Naive thymus-derived CD4-positive, alpha-beta T cell (primary cell): ENCODE measurements at regions of chr13 and their contacts with region 1.

Region 1: DNA sequence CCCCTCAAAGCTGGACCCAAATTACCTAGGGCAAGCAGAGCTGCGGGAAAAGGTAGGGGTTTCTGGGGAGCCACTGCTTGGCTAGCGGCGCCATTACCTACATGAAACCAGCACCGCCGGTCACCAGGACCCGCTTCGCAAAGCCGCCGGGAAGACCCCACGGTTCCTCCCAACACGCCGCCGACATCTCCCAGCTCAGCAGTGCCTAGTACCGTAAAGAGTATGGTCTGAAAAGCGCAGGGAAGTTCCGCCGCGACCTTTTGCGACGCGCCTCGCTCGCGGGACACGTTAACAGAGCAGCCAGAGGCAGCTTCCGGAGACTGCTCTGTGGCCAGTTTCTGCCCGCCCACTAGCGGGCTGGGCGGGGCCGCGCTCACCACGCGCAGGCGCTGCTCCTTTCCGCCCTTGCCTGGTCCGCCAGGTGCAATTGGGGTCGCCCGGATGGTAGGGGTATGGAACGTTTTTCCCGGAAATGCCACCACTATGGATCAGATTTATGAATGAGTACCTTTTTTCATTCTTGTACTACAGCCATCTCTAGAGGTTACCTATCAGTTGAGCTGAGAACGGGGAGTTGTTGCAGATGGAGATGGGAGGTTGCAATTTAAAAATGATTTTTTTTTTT is at the start of gene TGDS:
- DNase-seq: peak; percentile 71 to 89 (median 86)
- ATAC-seq: peak; percentile 99
- H3K4me3 ChIP-seq: peak within 1 kb of the TSS; percentile 92
- H3K4me3 Mint-ChIP-seq: peak within 1 kb of the TSS; percentile 92 to 99 (median 97)
- H3K27ac ChIP-seq: peak within 1 kb of the TSS; percentile 80
- H3K27ac Mint-ChIP-seq: peak within 1 kb of the TSS; percentile 83 to 96 (median 93)
- H3K4me1 ChIP-seq: peaks cover 16 to 19% of the 10 kb centered on the region in 2 donors
- H3K4me1 Mint-ChIP-seq: peaks cover 29 to 53% (median 41%) of the 10 kb centered on the region in 7 donors
- H3K27me3 ChIP-seq: no peaks in the 10 kb centered on the region
- H3K27me3 Mint-ChIP-seq: no peaks in the 10 kb centered on the region
- total RNA-seq, gene TGDS: 5.9 to 20.5 (median 13.7) TPM

Region 2: DNA sequence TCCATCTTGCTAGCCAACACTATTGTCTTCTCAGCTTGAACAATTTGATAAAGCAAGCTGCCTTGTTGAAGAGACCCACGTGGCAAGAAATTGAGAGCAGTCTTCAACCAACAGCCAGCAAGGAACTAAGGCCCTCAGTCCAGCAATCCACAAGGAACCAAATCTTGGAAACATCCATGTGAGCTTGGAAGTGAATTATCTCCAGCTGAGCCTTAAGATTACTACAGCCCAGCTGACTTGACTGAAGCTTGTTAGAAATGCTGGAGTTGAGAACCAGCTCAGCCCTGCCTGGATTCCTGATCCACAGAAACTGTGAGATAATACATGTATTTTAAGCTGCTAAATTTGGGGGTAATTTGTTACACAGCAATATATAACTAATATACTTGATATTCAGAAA is 90.3 kb before region 1 on chr13:
- CTCF ChIA-PET with region 1: no interaction called
- POLR2A ChIA-PET with region 1: interaction called, 4 read pairs
- intact Hi-C with region 1: loop called in 1 of 2 experiments (anchors 1 kb)
- DNase-seq: no peak
- ATAC-seq: no peak
- H3K4me3 ChIP-seq: no peak overlapping the region
- H3K4me3 Mint-ChIP-seq: no peak overlapping the region
- H3K27ac ChIP-seq: no peak overlapping the region
- H3K27ac Mint-ChIP-seq: no peak overlapping the region
- H3K4me1 ChIP-seq: peaks cover 3 to 18% of the 10 kb centered on the region in 2 donors
- H3K4me1 Mint-ChIP-seq: peaks cover 5 to 23% (median 21%) of the 10 kb centered on the region in 7 donors
- H3K27me3 ChIP-seq: no peaks in the 10 kb centered on the region
- H3K27me3 Mint-ChIP-seq: peaks cover 3 to 23% (median 6%) of the 10 kb centered on the region in 5 donors

Region 3: GRCh38 chr13:94558716-94559115 is 37.3 kb before region 1 on chr13:
- CTCF ChIA-PET with region 1: no interaction called
- POLR2A ChIA-PET with region 1: interaction called, 8 read pairs
- intact Hi-C with region 1: loop called (anchors 1 to 2 kb)
- DNase-seq: peak in 7 of 9 donors; percentile 20 to 65 (median 44)
- ATAC-seq: peak; percentile 59
- H3K4me3 ChIP-seq: peak overlapping the region; percentile 3
- H3K4me3 Mint-ChIP-seq: peak overlapping the region in 9 of 10 donors; percentile 38 to 82 (median 71)
- H3K27ac ChIP-seq: peak overlapping the region; percentile 22
- H3K27ac Mint-ChIP-seq: peak overlapping the region; percentile 80 to 91 (median 86)
- H3K4me1 ChIP-seq: peaks cover 0 to 14% of the 10 kb centered on the region in 2 donors
- H3K4me1 Mint-ChIP-seq: peaks cover 4 to 47% (median 36%) of the 10 kb centered on the region in 7 donors
- H3K27me3 ChIP-seq: no peaks in the 10 kb centered on the region
- H3K27me3 Mint-ChIP-seq: no peaks in the 10 kb centered on the region

Region 4: GRCh38 chr13:94739235-94739634 is 143.2 kb after region 1 on chr13:
- CTCF ChIA-PET with region 1: no interaction called
- POLR2A ChIA-PET with region 1: no interaction called
- intact Hi-C with region 1: no loop called
- DNase-seq: no peak
- ATAC-seq: no peak
- H3K4me3 ChIP-seq: no peak overlapping the region
- H3K4me3 Mint-ChIP-seq: no peak overlapping the region
- H3K27ac ChIP-seq: no peak overlapping the region
- H3K27ac Mint-ChIP-seq: no peak overlapping the region
- H3K4me1 ChIP-seq: no peaks in the 10 kb centered on the region
- H3K4me1 Mint-ChIP-seq: peaks cover 0 to 1% (median 0%) of the 10 kb centered on the region in 7 donors
- H3K27me3 ChIP-seq: no peaks in the 10 kb centered on the region
- H3K27me3 Mint-ChIP-seq: peaks cover 0 to 26% (median 22%) of the 10 kb centered on the region in 5 donors